Activated CD4-positive, alpha-beta memory T cell treated with anti-CD3 and anti-CD28 coated beads for 36 hours (primary cell): ENCODE measurements at regions of chr12 and their contacts with region 1.

Region 1: DNA sequence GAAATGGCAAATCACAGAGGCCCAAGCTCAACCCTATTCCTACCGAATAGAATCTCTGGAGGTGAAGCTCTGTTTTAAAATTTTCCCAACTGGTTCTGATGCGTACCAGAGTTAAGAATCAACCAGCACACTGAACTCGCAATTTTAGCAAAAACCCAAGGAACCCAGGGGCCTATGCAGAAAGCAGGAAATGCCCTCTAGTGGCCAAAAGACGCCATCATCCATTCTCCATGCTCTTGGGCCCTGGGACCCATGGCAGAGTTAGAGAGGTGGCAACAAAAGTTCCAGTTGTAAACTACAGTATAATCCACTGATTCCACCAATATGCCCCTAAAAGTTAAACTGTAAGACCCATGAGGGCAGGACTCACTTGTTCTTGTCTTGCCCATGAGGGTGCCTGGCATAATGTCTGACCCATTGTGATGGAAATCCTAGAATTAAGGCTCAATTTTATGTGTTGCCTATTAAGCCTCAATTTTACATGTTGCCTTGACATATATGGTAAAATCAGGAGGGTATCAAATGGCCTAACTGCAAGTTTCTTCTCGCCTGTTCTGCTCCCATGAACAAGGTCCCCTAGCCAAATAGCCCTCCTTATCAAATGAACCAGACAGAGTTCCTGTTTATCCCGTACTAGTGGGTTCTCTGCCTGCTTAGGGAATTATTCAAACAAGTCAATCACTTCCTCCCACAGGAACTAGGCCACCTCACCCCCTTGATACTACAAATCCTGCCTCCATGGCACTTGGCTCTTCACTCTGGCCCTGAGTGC is 137.5 kb upstream of the CPM start:
- DNase-seq: peak; percentile 74
- H3K4me3 Mint-ChIP-seq: no peak overlapping the region
- H3K27ac Mint-ChIP-seq: no peak overlapping the region
- H3K4me1 Mint-ChIP-seq: peaks cover 15% of the 10 kb centered on the region
- H3K27me3 Mint-ChIP-seq: peaks cover 14% of the 10 kb centered on the region

Region 2: DNA sequence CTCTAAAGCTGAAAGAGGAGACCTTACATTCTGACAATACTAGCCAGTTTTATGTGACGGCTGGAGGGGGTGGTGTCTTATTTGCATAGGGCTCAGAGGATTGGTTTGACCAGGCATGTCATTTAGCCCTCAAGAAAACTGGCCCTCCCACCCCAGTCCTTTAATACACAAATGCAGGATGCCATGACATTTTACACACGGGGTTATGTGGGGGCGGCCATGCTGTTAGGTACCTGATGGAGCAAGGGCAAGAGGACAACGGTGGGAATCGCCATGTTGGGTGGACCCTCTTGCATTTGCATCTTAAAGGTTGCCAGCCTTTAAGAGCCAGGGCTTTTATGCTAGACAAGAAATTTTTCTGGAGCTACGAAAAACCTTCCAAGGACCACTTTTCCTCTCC is 239.2 kb before region 1 on chr12:
- CTCF ChIA-PET with region 1: interaction called, 9 read pairs
- POLR2A ChIA-PET with region 1: no interaction called
- intact Hi-C with region 1: loop called (anchors 1 kb)
- DNase-seq: no peak
- H3K4me3 Mint-ChIP-seq: no peak overlapping the region
- H3K27ac Mint-ChIP-seq: no peak overlapping the region
- H3K4me1 Mint-ChIP-seq: peaks cover 15% of the 10 kb centered on the region
- H3K27me3 Mint-ChIP-seq: no peaks in the 10 kb centered on the region

Region 3: GRCh38 chr12:68866950-68867349 is 203.6 kb before region 1 on chr12:
- CTCF ChIA-PET with region 1: interaction called, 7 read pairs
- POLR2A ChIA-PET with region 1: no interaction called
- intact Hi-C with region 1: loop called (anchors 1 kb)
- DNase-seq: no peak
- H3K4me3 Mint-ChIP-seq: no peak overlapping the region
- H3K27ac Mint-ChIP-seq: no peak overlapping the region
- H3K4me1 Mint-ChIP-seq: no peaks in the 10 kb centered on the region
- H3K27me3 Mint-ChIP-seq: no peaks in the 10 kb centered on the region

Region 4: DNA sequence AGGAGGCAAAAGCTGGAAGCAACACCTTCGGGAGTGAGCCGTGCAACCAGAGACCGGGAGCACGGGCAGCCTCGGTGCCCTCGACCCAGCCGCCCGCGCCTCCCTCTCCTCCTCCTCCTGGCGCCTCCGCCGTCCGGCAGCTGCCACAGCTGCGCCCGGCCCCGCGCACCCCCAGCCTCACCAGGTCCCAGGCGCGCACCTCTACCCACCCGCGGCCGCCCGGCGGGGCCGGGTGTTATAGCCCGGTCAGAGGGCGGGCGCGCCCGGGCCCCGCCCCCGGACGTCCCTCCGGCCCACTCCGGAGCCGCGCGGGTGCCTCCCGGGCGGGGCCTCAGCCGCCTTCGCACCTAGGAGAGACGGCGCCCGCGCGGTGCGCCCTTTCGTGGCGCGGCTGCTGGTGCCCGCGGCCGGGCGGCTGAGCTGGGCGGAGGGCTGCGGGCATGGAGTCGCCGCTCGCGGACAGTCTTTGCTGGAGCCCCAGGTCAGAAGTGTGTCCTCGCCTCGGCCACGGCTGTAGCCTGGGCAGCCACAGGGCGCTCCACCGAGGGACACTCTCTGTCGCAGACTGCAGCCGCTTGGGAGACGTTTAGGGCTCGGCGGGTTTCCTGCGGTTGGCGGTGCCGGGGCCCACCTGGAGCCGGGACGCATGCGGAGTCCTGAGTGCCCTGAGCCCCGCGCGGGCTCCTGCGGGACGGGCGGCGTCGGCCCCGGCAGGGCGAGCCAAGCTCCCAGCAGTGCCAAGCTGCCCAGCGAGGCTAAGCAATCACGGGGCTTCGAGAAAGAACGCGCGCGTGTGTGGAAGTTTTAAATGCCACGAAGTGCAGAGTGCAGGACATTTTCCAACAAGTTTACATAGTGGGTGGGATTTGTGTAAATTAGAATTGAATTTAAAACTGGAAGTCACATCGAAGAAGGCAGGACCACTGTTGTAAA is 137.3 kb before region 1 on chr12 and contains the start of gene CPM:
- CTCF ChIA-PET with region 1: interaction called, 3 read pairs
- POLR2A ChIA-PET with region 1: no interaction called
- intact Hi-C with region 1: loop called (anchors 5 kb)
- DNase-seq: peak; percentile 81
- H3K4me3 Mint-ChIP-seq: peak within 1 kb of the TSS; percentile 82
- H3K27ac Mint-ChIP-seq: peak within 1 kb of the TSS; percentile 43
- H3K4me1 Mint-ChIP-seq: peaks cover 17% of the 10 kb centered on the region
- H3K27me3 Mint-ChIP-seq: peaks cover 17% of the 10 kb centered on the region
- total RNA-seq, gene CPM: 14.7 to 19.8 TPM

Region 5: GRCh38 chr12:69052613-69053408 is 17.7 kb before region 1 on chr12:
- CTCF ChIA-PET with region 1: interaction called, 8 read pairs
- POLR2A ChIA-PET with region 1: no interaction called
- intact Hi-C with region 1: loop called (anchors 1 kb)
- DNase-seq: peak; percentile 84
- H3K4me3 Mint-ChIP-seq: no peak overlapping the region
- H3K27ac Mint-ChIP-seq: peak overlapping the region; percentile 62
- H3K4me1 Mint-ChIP-seq: peaks cover 19% of the 10 kb centered on the region
- H3K27me3 Mint-ChIP-seq: peaks cover 13% of the 10 kb centered on the region

Region 6: GRCh38 chr12:69059483-69060457 is 10.7 kb before region 1 on chr12:
- CTCF ChIA-PET with region 1: interaction called, 19 read pairs
- POLR2A ChIA-PET with region 1: no interaction called
- intact Hi-C with region 1: loop called (anchors 1 kb)
- DNase-seq: peak; percentile 35
- H3K4me3 Mint-ChIP-seq: no peak overlapping the region
- H3K27ac Mint-ChIP-seq: peak overlapping the region; percentile 70
- H3K4me1 Mint-ChIP-seq: peaks cover 33% of the 10 kb centered on the region
- H3K27me3 Mint-ChIP-seq: no peaks in the 10 kb centered on the region

Region 7: DNA sequence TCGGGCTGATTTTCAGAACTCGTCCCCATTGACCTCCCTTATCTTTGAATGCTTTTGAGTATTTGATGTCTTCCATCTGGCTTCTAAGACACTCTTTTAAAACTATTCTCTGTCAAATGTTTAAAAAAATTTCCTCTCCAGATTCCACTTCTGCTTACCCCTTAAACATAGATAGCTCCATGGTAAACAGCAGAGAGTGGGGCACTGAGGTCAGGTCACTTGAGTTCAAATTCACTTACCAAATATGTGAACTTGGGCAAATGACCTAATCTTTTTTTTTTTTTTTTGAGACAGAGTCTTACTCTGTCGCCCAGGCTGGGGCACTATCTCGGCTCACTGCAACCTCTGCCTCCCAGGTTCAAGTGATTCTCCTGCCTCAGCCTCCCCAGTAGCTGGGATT is 42.1 kb after region 1 on chr12:
- CTCF ChIA-PET with region 1: no interaction called
- POLR2A ChIA-PET with region 1: no interaction called
- intact Hi-C with region 1: no loop called
- DNase-seq: no peak
- H3K4me3 Mint-ChIP-seq: no peak overlapping the region
- H3K27ac Mint-ChIP-seq: no peak overlapping the region
- H3K4me1 Mint-ChIP-seq: no peaks in the 10 kb centered on the region
- H3K27me3 Mint-ChIP-seq: no peaks in the 10 kb centered on the region

Region 8: DNA sequence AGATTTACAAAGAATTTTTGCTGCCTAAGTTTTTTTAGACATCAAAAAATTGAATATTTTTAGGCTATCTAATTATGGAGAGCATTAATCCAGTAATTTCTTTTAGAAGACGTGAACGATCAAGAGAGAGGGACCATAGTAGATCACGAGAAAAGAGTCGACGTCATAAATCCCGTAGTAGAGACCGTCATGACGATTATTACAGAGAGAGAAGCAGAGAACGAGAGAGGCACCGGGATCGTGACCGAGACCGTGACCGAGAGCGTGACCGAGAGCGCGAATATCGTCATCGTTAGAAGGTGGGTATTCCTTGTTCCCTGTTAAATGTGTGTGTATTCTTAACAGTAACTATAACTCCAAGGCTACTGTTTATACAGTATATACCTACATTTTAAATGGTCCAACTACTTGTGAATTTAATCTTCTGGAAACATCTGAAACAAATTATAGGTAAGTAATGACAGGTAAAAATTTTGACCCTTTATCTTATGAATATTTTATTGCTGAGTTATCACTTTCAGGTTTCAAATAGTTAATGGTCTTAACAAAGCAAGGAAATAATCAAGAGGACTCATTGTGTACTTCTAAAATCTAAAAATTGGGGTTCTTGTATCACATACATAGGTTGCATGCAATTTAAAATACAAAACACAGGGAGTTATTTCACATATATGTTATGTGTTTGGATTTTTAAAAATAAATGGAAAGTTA is 191.9 kb after region 1 on chr12:
- CTCF ChIA-PET with region 1: no interaction called
- POLR2A ChIA-PET with region 1: no interaction called
- intact Hi-C with region 1: no loop called
- DNase-seq: no peak
- H3K4me3 Mint-ChIP-seq: no peak overlapping the region
- H3K27ac Mint-ChIP-seq: no peak overlapping the region
- H3K4me1 Mint-ChIP-seq: peaks cover 11% of the 10 kb centered on the region
- H3K27me3 Mint-ChIP-seq: no peaks in the 10 kb centered on the region